PC-3 (cell line): ENCODE measurements at regions of chr17 and their contacts with region 1.

Region 1: DNA sequence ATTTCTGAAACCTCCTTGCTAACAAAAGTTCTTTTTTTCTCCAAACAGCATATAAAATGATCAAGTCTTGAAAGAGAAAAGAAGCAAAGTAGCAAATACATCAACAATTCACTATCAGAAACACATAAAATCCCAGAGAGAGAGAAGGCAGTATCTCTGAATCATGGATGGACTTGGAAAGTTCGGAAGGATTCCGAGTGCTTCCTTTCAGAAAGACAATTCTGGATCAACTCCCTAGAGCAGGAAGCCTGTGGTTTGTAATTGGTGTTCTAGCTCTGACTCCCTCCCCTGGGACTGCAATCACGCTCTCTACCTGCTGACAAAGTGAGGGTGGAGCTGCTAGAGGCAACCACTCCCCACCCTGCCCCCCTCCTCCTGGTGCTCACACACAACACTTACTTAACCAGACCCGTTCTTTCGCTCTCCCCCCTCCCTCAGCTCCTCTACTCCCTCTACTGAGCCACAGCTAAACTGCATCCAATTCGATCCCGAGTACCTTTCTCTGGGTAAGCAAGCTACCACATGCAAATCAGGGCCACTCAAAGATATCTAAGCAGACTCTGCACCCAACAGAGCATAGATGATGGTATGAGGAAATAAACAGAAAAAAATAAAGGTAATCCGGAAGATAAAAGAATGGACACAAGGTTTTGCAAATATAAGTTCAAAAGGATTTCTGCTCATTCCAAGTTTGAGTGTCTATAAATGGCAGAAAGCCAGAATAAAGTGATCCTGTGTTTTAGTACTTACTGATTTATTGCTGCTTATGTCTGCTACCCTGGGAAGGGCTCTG is at the start of gene RNF43:
- DNase-seq: peak; percentile 99
- ATAC-seq: peak; percentile 94
- H3K4me3 ChIP-seq: peak within 1 kb of the TSS; percentile 79
- H3K27ac ChIP-seq: peak within 1 kb of the TSS; percentile 72
- H3K4me1 ChIP-seq: peaks cover 51% of the 10 kb centered on the region
- H3K27me3 ChIP-seq: peaks cover 22% of the 10 kb centered on the region
- CTCF ChIP-seq: peak; percentile 95
- total RNA-seq, gene RNF43: 3.8 and 8.5 TPM in 2 replicates

Region 2: DNA sequence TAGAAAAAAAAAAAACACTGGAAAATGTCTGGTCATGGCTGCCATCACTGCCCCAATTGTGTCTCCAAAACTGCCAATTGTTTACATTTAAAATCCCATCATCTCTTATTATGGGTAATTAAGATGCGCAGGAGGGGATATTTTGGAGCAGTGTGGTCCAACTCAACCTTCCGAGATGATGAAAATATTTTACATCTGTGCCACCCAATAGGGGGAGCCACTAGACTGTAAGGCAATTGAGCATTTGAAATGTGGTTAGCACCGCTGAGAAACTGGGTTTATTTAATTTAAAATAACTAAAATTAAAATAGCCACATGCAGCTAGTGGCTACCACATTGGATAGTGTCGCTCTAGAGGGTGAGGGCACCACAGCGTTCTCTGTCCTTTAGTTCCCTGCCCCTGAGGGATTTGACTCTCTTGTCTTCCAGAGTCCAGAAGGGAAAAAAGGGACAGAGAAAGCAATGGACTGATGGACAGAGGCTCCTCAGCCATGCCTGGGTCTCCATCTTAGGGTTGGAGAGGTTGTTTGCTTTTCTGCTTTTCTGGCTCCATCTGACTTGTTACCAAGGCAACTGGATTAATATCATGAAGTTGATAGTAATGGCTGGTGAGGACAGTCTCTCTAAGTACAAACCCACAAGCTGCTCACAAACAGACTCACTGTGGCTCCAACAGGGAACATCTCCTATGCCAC is 140.2 kb before region 1 on chr17:
- CTCF ChIA-PET with region 1: no interaction called
- POLR2A ChIA-PET with region 1: no interaction called
- intact Hi-C with region 1: no loop called
- DNase-seq: peak; percentile 50
- ATAC-seq: no peak
- H3K4me3 ChIP-seq: no peak overlapping the region
- H3K27ac ChIP-seq: no peak overlapping the region
- H3K4me1 ChIP-seq: no peaks in the 10 kb centered on the region
- H3K27me3 ChIP-seq: 0 out of 2 replicates have a peak, but pooled peaks cover 19% of the 10 kb centered on the region
- CTCF ChIP-seq: peak; percentile 69

Region 3: DNA sequence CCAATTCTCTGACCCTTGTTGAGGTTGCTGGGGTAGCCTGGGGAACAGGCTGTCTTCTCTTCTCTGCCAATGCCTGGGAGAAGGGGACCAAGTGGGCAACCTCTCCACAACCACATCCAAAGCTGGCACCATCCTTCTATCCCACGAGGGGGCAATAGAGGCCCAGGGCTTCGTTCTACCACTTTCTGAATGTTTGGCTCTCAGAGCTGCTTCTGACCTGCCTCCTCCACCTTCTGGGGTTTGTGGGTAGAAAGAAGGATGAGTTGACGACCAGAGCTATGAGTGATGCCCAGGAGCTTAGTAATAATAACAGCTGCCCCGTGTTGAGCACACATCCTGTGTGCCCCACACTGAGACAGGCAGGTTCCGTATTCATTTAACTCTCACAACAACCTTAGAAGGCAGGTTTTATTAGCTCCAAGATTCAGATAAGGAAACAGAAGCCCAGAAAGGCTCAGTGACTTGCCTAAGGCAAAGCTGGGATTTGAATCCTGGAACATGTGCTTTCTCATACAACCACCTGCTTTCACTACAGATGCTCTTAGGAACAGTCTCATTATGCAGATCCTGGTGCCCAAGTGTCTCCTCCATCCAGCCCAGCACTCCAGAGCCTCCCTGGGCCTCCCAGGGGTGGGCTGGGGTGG is 100.0 kb before region 1 on chr17:
- CTCF ChIA-PET with region 1: interaction called, 61 read pairs
- POLR2A ChIA-PET with region 1: interaction called, 9 read pairs
- intact Hi-C with region 1: loop called (anchors 1 kb)
- DNase-seq: peak; percentile 95
- ATAC-seq: peak; percentile 87
- H3K4me3 ChIP-seq: no peak overlapping the region
- H3K27ac ChIP-seq: 0 out of 2 replicates have a peak overlapping the region, but pooled peaks have one; percentile 8
- H3K4me1 ChIP-seq: peaks cover 20% of the 10 kb centered on the region
- H3K27me3 ChIP-seq: no peaks in the 10 kb centered on the region
- CTCF ChIP-seq: peak; percentile 98

Region 4: DNA sequence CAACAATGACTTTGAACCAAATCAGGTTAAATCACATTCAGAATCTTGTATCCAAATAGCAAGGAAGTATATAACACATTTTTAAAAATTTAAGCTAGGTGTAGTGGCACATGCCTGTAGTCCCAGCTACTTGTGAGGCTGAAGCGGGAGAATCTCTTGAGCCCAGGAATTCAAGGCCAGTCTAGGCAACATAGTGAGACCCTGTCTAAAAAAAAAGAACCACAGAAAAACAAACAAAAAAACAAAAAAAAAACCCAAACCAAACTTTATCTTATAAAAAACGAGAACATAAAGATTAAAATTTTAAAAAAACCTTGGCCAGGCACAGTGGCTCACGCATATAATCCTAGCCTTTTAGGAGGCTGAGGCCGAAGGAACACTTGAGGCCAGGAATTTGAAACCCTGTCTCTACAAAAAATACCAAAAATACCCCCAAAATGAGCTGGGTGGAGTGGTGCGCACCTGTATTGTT is 77.1 kb before region 1 on chr17:
- CTCF ChIA-PET with region 1: interaction called, 17 read pairs
- POLR2A ChIA-PET with region 1: interaction called, 5 read pairs
- intact Hi-C with region 1: no loop called
- DNase-seq: no peak
- ATAC-seq: no peak
- H3K4me3 ChIP-seq: no peak overlapping the region
- H3K27ac ChIP-seq: no peak overlapping the region
- H3K4me1 ChIP-seq: peaks cover 6% of the 10 kb centered on the region; the same call in 1 of the 2 replicates
- H3K27me3 ChIP-seq: no peaks in the 10 kb centered on the region
- CTCF ChIP-seq: no peak

Region 5: DNA sequence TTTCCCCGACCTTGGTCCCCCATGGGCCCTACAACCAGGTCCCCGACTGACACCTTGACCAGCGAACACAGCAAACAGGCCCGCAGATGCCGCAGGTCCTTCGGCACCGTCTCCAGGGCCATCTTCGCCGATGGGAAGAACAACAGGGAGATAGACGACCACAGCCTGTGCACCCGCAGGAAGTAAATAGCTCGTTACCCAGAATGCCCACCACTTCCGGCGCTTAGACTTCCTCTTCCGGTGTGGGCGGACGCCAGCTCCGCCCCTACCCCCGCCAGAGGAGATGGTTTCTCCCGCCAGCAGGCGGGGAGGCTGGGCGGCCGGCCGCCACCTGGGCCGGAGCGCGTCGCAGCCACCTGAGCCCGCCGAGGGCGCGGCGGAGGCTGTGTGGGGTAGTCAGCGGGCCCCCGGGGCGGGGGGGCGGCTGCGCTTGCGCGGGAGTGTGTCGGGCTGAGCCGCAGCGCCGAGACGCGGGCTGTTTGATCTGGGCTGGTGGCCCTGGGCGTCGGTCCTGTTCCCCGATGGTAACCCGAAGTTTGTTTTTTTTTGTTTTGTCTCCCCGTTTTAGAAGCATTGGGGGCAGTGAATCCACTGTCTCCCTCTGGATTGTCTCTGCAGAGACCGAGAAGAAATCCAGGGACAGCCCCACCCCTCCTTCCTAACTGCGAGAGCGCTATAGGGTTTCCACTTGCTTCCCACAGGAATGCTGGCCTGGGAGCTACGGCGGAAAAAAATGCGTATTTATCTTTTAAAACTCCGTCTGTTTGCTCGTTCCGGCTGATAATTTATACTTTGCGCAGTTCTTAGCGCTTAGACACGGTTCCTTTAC is 65.3 kb before region 1 on chr17 and contains the start of gene SUPT4H1:
- CTCF ChIA-PET with region 1: interaction called, 41 read pairs
- POLR2A ChIA-PET with region 1: interaction called, 34 read pairs
- intact Hi-C with region 1: loop called (anchors 1 kb)
- DNase-seq: peak; percentile 99
- ATAC-seq: peak; percentile 95
- H3K4me3 ChIP-seq: peak within 1 kb of the TSS; percentile 97
- H3K27ac ChIP-seq: peak within 1 kb of the TSS; percentile 63
- H3K4me1 ChIP-seq: peaks cover 15% of the 10 kb centered on the region
- H3K27me3 ChIP-seq: no peaks in the 10 kb centered on the region
- CTCF ChIP-seq: no peak
- total RNA-seq, gene SUPT4H1: 100.0 and 116 TPM in 2 replicates

Region 6: DNA sequence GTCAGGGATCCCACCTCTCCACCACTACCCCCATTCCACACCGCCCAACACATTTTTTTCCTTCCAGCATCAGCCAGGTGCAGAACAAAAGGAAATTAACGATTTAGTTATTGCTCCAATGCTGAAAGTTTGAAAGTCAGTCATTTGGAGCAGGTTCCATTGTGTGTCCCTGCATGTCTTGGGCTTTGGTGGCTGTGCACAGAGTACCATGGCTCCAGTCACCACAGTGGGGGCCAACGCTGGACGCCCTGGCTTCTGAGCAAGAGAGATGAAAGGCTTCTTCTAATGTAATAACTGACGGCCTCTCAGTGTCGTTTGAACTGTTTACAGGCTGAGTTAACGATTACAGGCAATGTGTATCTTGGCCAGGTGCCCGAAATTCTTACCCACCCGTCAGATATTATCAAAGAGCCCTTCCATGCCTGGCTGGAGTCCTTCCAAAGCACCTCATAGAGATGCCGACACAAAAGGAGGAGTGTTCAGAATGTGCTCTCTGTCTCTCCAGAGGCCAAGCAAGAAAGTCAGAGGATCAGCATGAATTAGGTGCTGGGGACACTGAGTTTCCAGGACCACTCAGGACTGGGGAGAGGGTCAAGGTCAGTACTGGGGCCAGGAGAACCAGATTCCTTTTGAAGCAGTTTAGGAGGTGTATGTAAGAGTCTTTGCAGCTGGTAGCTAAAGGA is 26.1 kb before region 1 on chr17:
- CTCF ChIA-PET with region 1: interaction called, 6 read pairs
- POLR2A ChIA-PET with region 1: interaction called, 4 read pairs
- intact Hi-C with region 1: loop called (anchors 1 kb)
- DNase-seq: peak; percentile 99
- ATAC-seq: peak; percentile 58
- H3K4me3 ChIP-seq: no peak overlapping the region
- H3K27ac ChIP-seq: peak overlapping the region; percentile 20; the same call in 1 of the 2 replicates
- H3K4me1 ChIP-seq: peaks cover 57% of the 10 kb centered on the region
- H3K27me3 ChIP-seq: no peaks in the 10 kb centered on the region
- CTCF ChIP-seq: no peak

Region 7: GRCh38 chr17:58447039-58447975 is 29.8 kb after region 1 on chr17:
- CTCF ChIA-PET with region 1: interaction called, 3 read pairs
- POLR2A ChIA-PET with region 1: interaction called, 5 read pairs
- intact Hi-C with region 1: loop called (anchors 1 kb)
- DNase-seq: peak; percentile 97
- ATAC-seq: peak; percentile 100
- H3K4me3 ChIP-seq: no peak overlapping the region
- H3K27ac ChIP-seq: no peak overlapping the region
- H3K4me1 ChIP-seq: no peaks in the 10 kb centered on the region
- H3K27me3 ChIP-seq: peaks cover 9% of the 10 kb centered on the region; the same call in 1 of the 2 replicates
- CTCF ChIP-seq: peak; percentile 96

Region 8: GRCh38 chr17:58577642-58578091 is 160.2 kb after region 1 on chr17:
- CTCF ChIA-PET with region 1: no interaction called
- POLR2A ChIA-PET with region 1: interaction called, 21 read pairs
- intact Hi-C with region 1: no loop called
- DNase-seq: peak; percentile 80
- ATAC-seq: peak; percentile 65
- H3K4me3 ChIP-seq: no peak overlapping the region
- H3K27ac ChIP-seq: no peak overlapping the region
- H3K4me1 ChIP-seq: peaks cover 9% of the 10 kb centered on the region
- H3K27me3 ChIP-seq: no peaks in the 10 kb centered on the region
- CTCF ChIP-seq: peak; percentile 94

Region 9: GRCh38 chr17:59521204-59522126 is 1104.0 kb after region 1 on chr17:
- CTCF ChIA-PET with region 1: no interaction called
- POLR2A ChIA-PET with region 1: no interaction called
- intact Hi-C with region 1: no loop called
- DNase-seq: peak; percentile 81
- ATAC-seq: peak; percentile 97
- H3K4me3 ChIP-seq: no peak overlapping the region
- H3K27ac ChIP-seq: no peak overlapping the region
- H3K4me1 ChIP-seq: peaks cover 4% of the 10 kb centered on the region; the same call in 1 of the 2 replicates
- H3K27me3 ChIP-seq: no peaks in the 10 kb centered on the region
- CTCF ChIP-seq: peak; percentile 95